ENCODE measurements at regions of chr2 and their contacts with region 1.

Region 1: GRCh38 chr2:172102391-172103278 is at the start of gene DLX2:
- DNase-seq: peak; percentile 85 to 91
- ATAC-seq: peak; percentile 66 to 81
- H3K4me3 ChIP-seq: peak within 1 kb of the TSS; percentile 74
- H3K27ac ChIP-seq: peak within 1 kb of the TSS; percentile 45 to 74; a peak in 5 of 6 replicates
- H3K4me1 ChIP-seq: peaks cover 26% of the 10 kb centered on the region
- CTCF ChIP-seq: no peak
- EP300 ChIP-seq: no peak
- POLR2A ChIP-seq: 0 out of 2 replicates have a peak, but pooled peaks have one; percentile 20
- RAD21 ChIP-seq: 0 out of 5 replicates have a peak, but pooled peaks of 1 of the 2 experiments have one; percentile 6
- polyA plus RNA-seq, gene DLX2: 0.04 TPM in 2 replicates

Region 2: GRCh38 chr2:171574149-171574795 is 528.4 kb before region 1 on chr2:
- CTCF ChIA-PET with region 1: interaction called, 14 read pairs
- POLR2A ChIA-PET with region 1: no interaction called
- DNase-seq: peak; percentile 80 to 85
- ATAC-seq: peak; percentile 97 to 99
- H3K4me3 ChIP-seq: no peak overlapping the region
- H3K27ac ChIP-seq: 0 out of 6 replicates have a peak overlapping the region, but pooled peaks have one; percentile 2 to 46
- H3K4me1 ChIP-seq: no peaks in the 10 kb centered on the region
- CTCF ChIP-seq: peak; percentile 91
- EP300 ChIP-seq: no peak
- POLR2A ChIP-seq: no peak
- RAD21 ChIP-seq: peak; percentile 90 to 94

Region 3: GRCh38 chr2:171723724-171724683 is 378.6 kb before region 1 on chr2:
- CTCF ChIA-PET with region 1: interaction called, 10 read pairs
- POLR2A ChIA-PET with region 1: no interaction called
- DNase-seq: peak in 1 of 2 experiments; percentile 9
- ATAC-seq: peak in 1 of 2 experiments; percentile 60; a peak in 3 of 6 replicates
- H3K4me3 ChIP-seq: no peak overlapping the region
- H3K27ac ChIP-seq: no peak overlapping the region
- H3K4me1 ChIP-seq: no peaks in the 10 kb centered on the region
- CTCF ChIP-seq: no peak
- EP300 ChIP-seq: no peak
- POLR2A ChIP-seq: no peak
- RAD21 ChIP-seq: no peak

Region 4: DNA sequence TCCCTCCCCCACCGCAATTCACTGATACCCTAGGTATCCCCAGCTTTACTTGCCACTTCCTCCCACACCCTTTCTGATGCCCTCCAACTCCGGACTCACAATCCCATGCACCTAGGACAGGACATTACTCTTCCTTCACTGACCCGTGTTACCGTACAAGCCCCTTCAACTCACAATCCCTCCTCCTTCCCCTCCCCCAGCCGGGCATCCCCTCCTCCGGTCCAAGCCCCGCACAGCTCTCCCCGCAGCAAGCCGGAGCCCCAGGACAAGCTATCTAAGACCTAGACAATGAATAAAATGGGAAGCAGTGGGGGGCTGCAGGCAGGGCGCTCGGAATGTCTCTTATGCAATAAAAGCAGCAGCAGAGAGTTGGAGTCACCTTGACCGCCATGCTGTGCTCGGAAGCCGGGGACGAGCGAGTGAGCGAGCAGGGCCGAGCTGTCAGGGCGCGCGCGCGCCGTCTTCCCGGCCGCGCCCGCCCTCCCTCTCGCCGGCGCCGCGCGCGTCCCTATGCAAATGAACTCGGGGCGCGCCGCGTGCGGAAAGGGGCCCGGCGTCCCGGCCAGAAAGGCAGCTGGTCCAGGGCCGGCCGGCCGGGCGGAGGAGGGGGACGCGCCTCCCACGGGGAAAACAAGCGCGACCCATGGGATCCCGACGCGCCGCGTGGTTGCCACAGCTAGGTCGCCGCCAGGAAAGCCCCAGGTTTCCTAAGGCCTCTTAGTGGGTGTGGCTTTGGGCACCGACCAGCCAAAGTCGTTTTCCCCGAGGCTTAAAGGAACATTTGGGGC is 208.6 kb before region 1 on chr2 and contains the start of gene SLC25A12:
- CTCF ChIA-PET with region 1: interaction called, 7 read pairs
- POLR2A ChIA-PET with region 1: interaction called, 11 read pairs
- DNase-seq: peak; percentile 79 to 83
- ATAC-seq: peak; percentile 98 to 99
- H3K4me3 ChIP-seq: peak within 1 kb of the TSS; percentile 92
- H3K27ac ChIP-seq: peak within 1 kb of the TSS; percentile 92 to 96
- H3K4me1 ChIP-seq: peaks cover 13% of the 10 kb centered on the region; the same call in 2 of the 3 replicates
- CTCF ChIP-seq: no peak
- EP300 ChIP-seq: no peak
- POLR2A ChIP-seq: peak; percentile 68
- RAD21 ChIP-seq: 0 out of 5 replicates have a peak, but pooled peaks of 1 of the 2 experiments have one; percentile 15
- polyA plus RNA-seq, gene SLC25A12: 26.8 and 27.5 TPM in 2 replicates

Region 5: GRCh38 chr2:172066394-172066886 is 36.2 kb before region 1 on chr2:
- CTCF ChIA-PET with region 1: no interaction called
- POLR2A ChIA-PET with region 1: no interaction called
- DNase-seq: no peak
- ATAC-seq: no peak
- H3K4me3 ChIP-seq: no peak overlapping the region
- H3K27ac ChIP-seq: no peak overlapping the region
- H3K4me1 ChIP-seq: no peaks in the 10 kb centered on the region
- CTCF ChIP-seq: no peak
- EP300 ChIP-seq: no peak
- POLR2A ChIP-seq: no peak
- RAD21 ChIP-seq: no peak

Region 6: DNA sequence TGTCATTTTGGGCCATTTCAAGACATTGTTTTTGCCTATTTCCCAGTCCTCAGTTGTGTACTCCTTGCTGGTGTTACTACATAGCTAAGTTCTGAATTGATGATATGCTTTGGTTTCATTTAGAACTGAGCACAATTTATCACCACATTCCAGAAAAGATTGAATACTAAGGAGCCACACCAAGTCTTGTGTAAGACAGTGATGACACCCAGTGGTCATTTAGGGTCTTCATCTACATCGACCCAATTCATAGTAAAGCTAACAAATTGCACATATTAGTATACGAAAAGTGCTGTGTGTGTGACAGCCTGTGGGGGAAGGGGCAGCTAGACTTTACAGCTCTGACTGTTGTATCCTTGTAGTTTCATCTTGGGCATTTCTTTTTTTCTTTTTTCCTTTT is 11.0 kb after region 1 on chr2:
- CTCF ChIA-PET with region 1: interaction called, 82 read pairs
- POLR2A ChIA-PET with region 1: no interaction called
- DNase-seq: peak in 1 of 2 experiments; percentile 57
- ATAC-seq: peak; percentile 74 to 85; a peak in 5 of 6 replicates
- H3K4me3 ChIP-seq: no peak overlapping the region
- H3K27ac ChIP-seq: no peak overlapping the region
- H3K4me1 ChIP-seq: peaks cover 4% of the 10 kb centered on the region
- CTCF ChIP-seq: peak; percentile 52
- EP300 ChIP-seq: no peak
- POLR2A ChIP-seq: no peak
- RAD21 ChIP-seq: peak; percentile 62 to 77

Region 7: GRCh38 chr2:172261292-172261691 is 158.7 kb after region 1 on chr2:
- CTCF ChIA-PET with region 1: no interaction called
- POLR2A ChIA-PET with region 1: no interaction called
- DNase-seq: no peak
- ATAC-seq: no peak
- H3K4me3 ChIP-seq: no peak overlapping the region
- H3K27ac ChIP-seq: no peak overlapping the region
- H3K4me1 ChIP-seq: no peaks in the 10 kb centered on the region
- CTCF ChIP-seq: no peak
- EP300 ChIP-seq: no peak
- POLR2A ChIP-seq: no peak
- RAD21 ChIP-seq: no peak

Measured in A549 (cell line).